Activated T-helper 1 cell treated with anti-CD3 and anti-CD28 coated beads, Interleukin-12 subunit alpha, Interleukin-12 subunit beta, Interleukin-2, Interleukin-4 antibody, amounts not matched to agents 30 ng/mL and 10 ng/mL and 1 ng/mL, durations not matched to agents 14 hours and 24 hours and 36 hours (primary cell): ENCODE measurements at regions of chr7 and their contacts with region 1.

Region 1: GRCh38 chr7:24922099-24922773 is 57.7 kb downstream of the OSBPL3 start:
- DNase-seq: no peak
- H3K4me3 Mint-ChIP-seq: peak overlapping the region; percentile 3
- H3K27ac Mint-ChIP-seq: peak overlapping the region; percentile 91
- H3K4me1 Mint-ChIP-seq: peaks cover 95% of the 10 kb centered on the region
- H3K27me3 Mint-ChIP-seq: no peaks in the 10 kb centered on the region

Region 2: GRCh38 chr7:24869572-24869971 is 52.7 kb before region 1 on chr7:
- intact Hi-C with region 1: loop called (anchors 1 kb)
- DNase-seq: no peak
- H3K4me3 Mint-ChIP-seq: no peak overlapping the region
- H3K27ac Mint-ChIP-seq: peak overlapping the region; percentile 13
- H3K4me1 Mint-ChIP-seq: peaks cover 49% of the 10 kb centered on the region
- H3K27me3 Mint-ChIP-seq: no peaks in the 10 kb centered on the region

Region 3: DNA sequence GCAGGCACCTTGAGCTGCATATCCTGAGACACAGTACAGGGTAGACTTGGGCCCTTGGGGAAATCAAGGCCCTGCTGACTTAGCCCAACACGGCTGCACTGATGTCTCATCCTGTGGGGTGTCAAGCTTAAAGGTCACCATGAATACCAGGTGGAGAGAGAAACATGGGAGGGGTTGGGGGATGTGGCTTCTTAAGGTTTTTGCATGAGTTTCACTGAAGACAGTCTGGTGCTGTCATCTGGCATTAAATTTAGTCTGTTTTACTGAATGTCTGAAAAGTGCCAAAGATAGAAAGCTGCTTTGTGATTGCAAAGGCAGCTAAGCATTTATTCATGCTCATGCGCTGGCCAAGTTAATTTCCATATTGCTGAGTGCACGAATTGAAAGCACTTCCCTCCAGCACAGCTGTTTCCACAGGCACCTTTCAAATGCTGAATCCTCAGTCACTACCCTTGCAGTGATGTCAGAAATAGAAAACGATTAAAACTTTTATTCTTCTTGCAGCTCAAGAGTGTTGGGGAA is 44.4 kb before region 1 on chr7:
- intact Hi-C with region 1: loop called (anchors 2 kb)
- DNase-seq: peak; percentile 5
- H3K4me3 Mint-ChIP-seq: peak overlapping the region; percentile 68
- H3K27ac Mint-ChIP-seq: peak overlapping the region; percentile 78
- H3K4me1 Mint-ChIP-seq: peaks cover 60% of the 10 kb centered on the region
- H3K27me3 Mint-ChIP-seq: no peaks in the 10 kb centered on the region

Region 4: GRCh38 chr7:25028370-25029021 is 106.3 kb after region 1 on chr7:
- intact Hi-C with region 1: loop called (anchors 1 kb)
- DNase-seq: peak; percentile 13
- H3K4me3 Mint-ChIP-seq: peak overlapping the region; percentile 12
- H3K27ac Mint-ChIP-seq: peak overlapping the region; percentile 93
- H3K4me1 Mint-ChIP-seq: peaks cover 40% of the 10 kb centered on the region
- H3K27me3 Mint-ChIP-seq: peaks cover 12% of the 10 kb centered on the region